Motor neuron (in vitro differentiated cells): ENCODE measurements at regions of chr7 and their contacts with region 1.

Region 1: DNA sequence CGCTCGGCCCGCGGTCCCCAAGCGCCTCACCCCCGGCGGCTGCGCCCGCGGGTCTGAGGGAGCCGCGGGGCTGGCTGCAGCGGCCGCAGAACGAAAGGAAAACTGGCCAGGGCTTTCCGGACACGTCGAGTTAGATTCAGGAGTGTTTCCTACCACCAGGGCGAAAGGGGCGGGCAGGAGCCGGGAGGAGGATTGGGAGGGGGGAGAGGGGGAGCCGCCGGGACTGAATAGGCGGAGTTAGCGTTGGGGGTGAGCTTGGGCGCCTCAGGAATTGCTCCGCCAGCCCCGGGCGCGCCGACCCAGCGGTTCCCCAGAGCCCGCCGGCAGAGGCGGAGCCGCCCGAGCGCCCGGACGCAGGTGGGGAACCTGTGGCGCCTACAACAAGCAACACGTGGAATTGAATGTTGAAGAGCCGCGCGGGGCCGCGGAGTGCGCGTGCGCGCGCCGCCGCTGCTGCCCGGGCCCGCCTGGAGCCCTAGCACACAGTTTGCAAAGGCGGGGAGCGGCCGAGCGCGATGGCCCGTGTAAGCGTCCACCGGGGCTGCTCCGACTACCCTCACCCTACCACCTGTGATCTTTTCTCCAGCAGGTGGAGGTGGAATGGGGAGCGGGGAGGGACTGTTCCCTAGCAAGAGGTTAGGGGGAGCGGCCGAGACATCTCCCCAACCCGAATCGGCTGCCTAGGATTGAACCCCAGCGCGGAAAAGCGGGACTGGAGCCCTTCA is at the start of gene CADPS2:
- ATAC-seq: peak; percentile 79 to 89 (median 84)
- H3K4me3 ChIP-seq: peak within 1 kb of the TSS; percentile 69 to 84 (median 76)
- H3K27ac ChIP-seq: peak within 1 kb of the TSS; percentile 19 to 75
- H3K4me1 ChIP-seq: no peaks in the 10 kb centered on the region
- total RNA-seq, gene CADPS2: 1.3 to 89.1 (median 3.1) TPM

Region 2: DNA sequence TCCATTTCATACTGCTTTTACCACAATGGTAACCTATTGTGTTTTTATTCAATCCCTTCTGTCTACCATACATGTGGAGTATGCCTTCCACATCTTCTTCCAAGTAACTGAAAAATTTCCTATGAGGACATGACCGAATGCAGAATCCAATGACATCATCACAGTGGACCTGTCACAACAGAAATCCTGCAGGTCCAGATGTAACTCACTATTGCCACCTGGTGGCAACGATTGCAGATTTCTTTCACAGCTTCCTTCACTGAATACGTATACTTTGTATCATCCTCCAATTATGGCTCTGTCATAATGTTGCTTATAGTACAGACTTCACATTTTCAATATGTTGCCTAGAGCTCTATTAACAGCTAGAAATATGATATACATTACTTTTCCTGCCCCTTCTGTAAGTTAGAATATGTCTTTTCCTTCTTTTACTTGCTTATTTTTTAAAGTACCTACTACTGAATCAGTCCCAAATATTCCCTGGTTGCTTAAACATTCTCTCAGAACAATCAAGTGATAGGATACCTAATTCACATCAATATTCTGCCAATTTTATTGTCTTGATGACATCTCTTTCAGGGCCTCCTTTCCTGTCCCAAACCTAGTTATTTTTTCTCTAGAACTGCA is 267.8 kb after region 1 on chr7:
- in situ Hi-C with region 1: loop called in 1 of 9 experiments (anchors 25 kb)
- ATAC-seq: peak; percentile 90 to 99 (median 94)
- H3K4me3 ChIP-seq: no peak overlapping the region
- H3K27ac ChIP-seq: no peak overlapping the region
- H3K4me1 ChIP-seq: peaks cover 0 to 4% of the 10 kb centered on the region in 2 donors